Right ventricle myocardium superior (tissue), 1 donor: ENCODE measurements at regions of chr2 and their contacts with region 1.

Region 1: GRCh38 chr2:164412831-164413230 is 208.5 kb downstream of the GRB14 start:
- DNase-seq: no peak
- ATAC-seq: no peak

Region 2: GRCh38 chr2:163324429-163325076 is 1088.3 kb before region 1 on chr2:
- intact Hi-C with region 1: loop called (anchors 10 kb)
- DNase-seq: no peak
- ATAC-seq: no peak

Region 3: GRCh38 chr2:164826293-164827243 is 413.7 kb after region 1 on chr2:
- intact Hi-C with region 1: no loop called
- DNase-seq: peak; percentile 58
- ATAC-seq: peak; percentile 96